AG04449 (cell line): ENCODE measurements at regions of chr12 and their contacts with region 1.

Region 1: DNA sequence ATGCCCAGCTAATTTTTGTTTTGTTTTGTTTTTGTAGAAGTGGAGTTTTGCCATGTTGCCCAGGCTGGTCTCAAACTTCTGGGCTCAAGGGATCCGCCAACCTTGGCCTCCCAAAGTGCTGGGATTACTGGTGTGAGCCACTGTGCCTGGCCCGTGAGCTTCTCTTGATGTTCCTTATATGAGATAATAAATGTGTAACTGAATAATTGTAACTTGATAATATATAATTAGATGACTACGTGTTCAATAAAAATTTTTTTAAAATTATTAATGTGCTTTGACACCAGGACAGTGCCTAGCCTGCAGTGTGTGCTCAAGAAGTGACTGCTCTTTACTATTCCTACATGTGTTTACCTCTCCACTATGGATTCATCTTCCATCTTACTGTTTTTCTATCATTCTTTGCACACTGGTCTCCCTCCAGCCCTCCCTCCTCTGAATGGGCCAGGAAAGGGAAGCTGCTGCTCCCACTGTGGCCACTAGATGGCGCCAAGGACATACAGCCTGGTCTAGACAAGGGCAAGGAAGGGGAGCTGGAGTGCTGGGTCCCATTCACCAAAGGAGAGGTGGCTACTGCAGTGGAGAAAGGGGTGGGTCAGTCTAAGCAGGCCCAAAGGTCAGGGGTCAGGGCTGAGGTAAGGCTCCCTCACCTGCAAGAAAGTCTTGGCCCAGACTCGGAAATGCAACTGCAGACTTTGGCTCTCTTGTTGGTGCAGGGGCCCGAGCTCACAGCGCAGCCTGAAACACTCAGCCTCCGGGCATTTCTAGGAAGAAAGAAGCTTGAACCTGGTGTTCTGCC is 14.7 kb upstream of the ZNF385A start:
- DNase-seq: no peak
- H3K4me3 ChIP-seq: no peak overlapping the region
- CTCF ChIP-seq: peak; percentile 99

Region 2: GRCh38 chr12:54411391-54412241 is 12.4 kb after region 1 on chr12:
- CTCF ChIA-PET with region 1: interaction called, 501 read pairs
- POLR2A ChIA-PET with region 1: interaction called, 35 read pairs
- DNase-seq: peak; percentile 77
- H3K4me3 ChIP-seq: no peak overlapping the region
- CTCF ChIP-seq: no peak

Region 3: GRCh38 chr12:54419088-54419892 is 20.1 kb after region 1 on chr12 and contains the start of gene ITGA5:
- CTCF ChIA-PET with region 1: interaction called, 940 read pairs
- POLR2A ChIA-PET with region 1: interaction called, 5 read pairs
- DNase-seq: no peak
- H3K4me3 ChIP-seq: peak within 1 kb of the TSS; percentile 87
- CTCF ChIP-seq: no peak

Region 4: DNA sequence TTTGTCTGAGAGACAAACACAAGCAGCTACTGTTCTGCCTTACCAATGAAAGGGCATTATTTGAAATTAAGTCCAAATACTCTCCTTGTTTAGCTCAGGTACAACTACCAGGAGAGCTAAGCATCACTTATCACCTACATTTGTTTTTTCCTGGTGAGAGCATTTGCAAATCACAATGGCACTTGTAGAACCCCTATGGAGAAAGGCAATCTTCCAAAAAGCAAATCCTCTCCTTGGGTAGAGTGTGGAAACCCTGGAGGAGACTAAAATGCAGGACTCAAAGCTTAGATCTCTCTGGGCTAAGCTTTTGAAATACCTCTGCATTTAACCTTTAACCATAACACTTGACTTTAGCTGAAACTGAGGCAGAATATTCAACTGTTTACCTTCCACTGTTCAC is 53.4 kb after region 1 on chr12:
- CTCF ChIA-PET with region 1: interaction called, 940 read pairs
- POLR2A ChIA-PET with region 1: no interaction called
- DNase-seq: no peak
- H3K4me3 ChIP-seq: no peak overlapping the region
- CTCF ChIP-seq: no peak

Region 5: GRCh38 chr12:54463034-54463433 is 63.8 kb after region 1 on chr12:
- CTCF ChIA-PET with region 1: interaction called, 12 read pairs
- POLR2A ChIA-PET with region 1: no interaction called
- DNase-seq: no peak
- H3K4me3 ChIP-seq: no peak overlapping the region
- CTCF ChIP-seq: no peak